Naive thymus-derived CD4-positive, alpha-beta T cell (primary cell): ENCODE measurements at regions of chr16 and their contacts with region 1.

Region 1: GRCh38 chr16:88452482-88453216 is 431 bp upstream of the ZFPM1 start:
- DNase-seq: peak; percentile 95 to 100 (median 98)
- ATAC-seq: peak; percentile 90
- H3K4me3 ChIP-seq: peak overlapping the region; percentile 61
- H3K4me3 Mint-ChIP-seq: peak overlapping the region; percentile 81 to 94 (median 84)
- H3K27ac ChIP-seq: peak overlapping the region; percentile 80
- H3K27ac Mint-ChIP-seq: peak overlapping the region; percentile 67 to 95 (median 87)
- H3K4me1 ChIP-seq: peaks cover 20 to 28% of the 10 kb centered on the region in 2 donors
- H3K4me1 Mint-ChIP-seq: peaks cover 19 to 29% (median 26%) of the 10 kb centered on the region in 7 donors
- H3K27me3 ChIP-seq: no peaks in the 10 kb centered on the region
- H3K27me3 Mint-ChIP-seq: peaks cover 0 to 9% (median 0%) of the 10 kb centered on the region in 5 donors

Region 2: GRCh38 chr16:87950765-87951549 is 501.7 kb before region 1 on chr16 and contains the start of gene BANP:
- CTCF ChIA-PET with region 1: no interaction called
- POLR2A ChIA-PET with region 1: interaction called, 4 read pairs
- intact Hi-C with region 1: loop called (anchors 1 to 5 kb)
- DNase-seq: peak; percentile 96 to 99 (median 99)
- ATAC-seq: peak; percentile 93
- H3K4me3 ChIP-seq: peak within 1 kb of the TSS; percentile 83
- H3K4me3 Mint-ChIP-seq: peak within 1 kb of the TSS; percentile 92 to 100 (median 99)
- H3K27ac ChIP-seq: peak within 1 kb of the TSS; percentile 90
- H3K27ac Mint-ChIP-seq: peak within 1 kb of the TSS; percentile 97 to 100 (median 99)
- H3K4me1 ChIP-seq: peaks cover 15 to 33% of the 10 kb centered on the region in 2 donors
- H3K4me1 Mint-ChIP-seq: peaks cover 27 to 66% (median 43%) of the 10 kb centered on the region in 7 donors
- H3K27me3 ChIP-seq: no peaks in the 10 kb centered on the region
- H3K27me3 Mint-ChIP-seq: peaks cover 0 to 8% (median 2%) of the 10 kb centered on the region in 5 donors
- total RNA-seq, gene BANP: 43.6 to 81.2 (median 68.5) TPM

Region 3: GRCh38 chr16:88505405-88506082 is 52.9 kb after region 1 on chr16:
- CTCF ChIA-PET with region 1: interaction called, 3 read pairs
- POLR2A ChIA-PET with region 1: no interaction called
- intact Hi-C with region 1: loop called in 1 of 2 experiments (anchors 1 kb)
- DNase-seq: peak; percentile 46 to 83 (median 75)
- ATAC-seq: peak; percentile 85
- H3K4me3 ChIP-seq: no peak overlapping the region
- H3K4me3 Mint-ChIP-seq: no peak overlapping the region
- H3K27ac ChIP-seq: peak overlapping the region; percentile 14
- H3K27ac Mint-ChIP-seq: peak overlapping the region in 3 of 9 donors; percentile 45 to 85 (median 46)
- H3K4me1 ChIP-seq: peaks cover 0 to 3% of the 10 kb centered on the region in 2 donors
- H3K4me1 Mint-ChIP-seq: peaks cover 0 to 18% (median 6%) of the 10 kb centered on the region in 7 donors
- H3K27me3 ChIP-seq: no peaks in the 10 kb centered on the region
- H3K27me3 Mint-ChIP-seq: no peaks in the 10 kb centered on the region

Region 4: GRCh38 chr16:88650749-88651275 is 198.2 kb after region 1 on chr16 and contains the start of gene CYBA:
- CTCF ChIA-PET with region 1: no interaction called
- POLR2A ChIA-PET with region 1: no interaction called
- intact Hi-C with region 1: loop called in 1 of 2 experiments (anchors 2 kb)
- DNase-seq: peak; percentile 54 to 88 (median 68)
- ATAC-seq: peak; percentile 92
- H3K4me3 ChIP-seq: peak within 1 kb of the TSS; percentile 78
- H3K4me3 Mint-ChIP-seq: peak within 1 kb of the TSS; percentile 84 to 93 (median 90)
- H3K27ac ChIP-seq: peak within 1 kb of the TSS; percentile 84
- H3K27ac Mint-ChIP-seq: peak within 1 kb of the TSS; percentile 82 to 98 (median 91)
- H3K4me1 ChIP-seq: peaks cover 20 to 28% of the 10 kb centered on the region in 2 donors
- H3K4me1 Mint-ChIP-seq: peaks cover 6 to 27% (median 13%) of the 10 kb centered on the region in 7 donors
- H3K27me3 ChIP-seq: no peaks in the 10 kb centered on the region
- H3K27me3 Mint-ChIP-seq: no peaks in the 10 kb centered on the region
- total RNA-seq, gene CYBA: 240 to 498 (median 281) TPM

Region 5: GRCh38 chr16:88706288-88706964 is 253.8 kb after region 1 on chr16 and contains the starts of genes CTU2 and RNF166:
- CTCF ChIA-PET with region 1: no interaction called
- POLR2A ChIA-PET with region 1: no interaction called
- intact Hi-C with region 1: loop called (anchors 1 to 5 kb)
- DNase-seq: peak; percentile 86 to 98 (median 92)
- ATAC-seq: peak; percentile 84
- H3K4me3 ChIP-seq: peak within 1 kb of the TSS; percentile 79
- H3K4me3 Mint-ChIP-seq: peak within 1 kb of the TSS; percentile 78 to 98 (median 94)
- H3K27ac ChIP-seq: peak within 1 kb of the TSS; percentile 88
- H3K27ac Mint-ChIP-seq: peak within 1 kb of the TSS; percentile 85 to 98 (median 97)
- H3K4me1 ChIP-seq: peaks cover 25 to 40% of the 10 kb centered on the region in 2 donors
- H3K4me1 Mint-ChIP-seq: peaks cover 31 to 45% (median 41%) of the 10 kb centered on the region in 7 donors
- H3K27me3 ChIP-seq: no peaks in the 10 kb centered on the region
- H3K27me3 Mint-ChIP-seq: no peaks in the 10 kb centered on the region
- total RNA-seq, gene CTU2: 26.0 to 43.3 (median 28.3) TPM
- total RNA-seq, gene RNF166: 99.8 to 324 (median 133) TPM

Region 6: DNA sequence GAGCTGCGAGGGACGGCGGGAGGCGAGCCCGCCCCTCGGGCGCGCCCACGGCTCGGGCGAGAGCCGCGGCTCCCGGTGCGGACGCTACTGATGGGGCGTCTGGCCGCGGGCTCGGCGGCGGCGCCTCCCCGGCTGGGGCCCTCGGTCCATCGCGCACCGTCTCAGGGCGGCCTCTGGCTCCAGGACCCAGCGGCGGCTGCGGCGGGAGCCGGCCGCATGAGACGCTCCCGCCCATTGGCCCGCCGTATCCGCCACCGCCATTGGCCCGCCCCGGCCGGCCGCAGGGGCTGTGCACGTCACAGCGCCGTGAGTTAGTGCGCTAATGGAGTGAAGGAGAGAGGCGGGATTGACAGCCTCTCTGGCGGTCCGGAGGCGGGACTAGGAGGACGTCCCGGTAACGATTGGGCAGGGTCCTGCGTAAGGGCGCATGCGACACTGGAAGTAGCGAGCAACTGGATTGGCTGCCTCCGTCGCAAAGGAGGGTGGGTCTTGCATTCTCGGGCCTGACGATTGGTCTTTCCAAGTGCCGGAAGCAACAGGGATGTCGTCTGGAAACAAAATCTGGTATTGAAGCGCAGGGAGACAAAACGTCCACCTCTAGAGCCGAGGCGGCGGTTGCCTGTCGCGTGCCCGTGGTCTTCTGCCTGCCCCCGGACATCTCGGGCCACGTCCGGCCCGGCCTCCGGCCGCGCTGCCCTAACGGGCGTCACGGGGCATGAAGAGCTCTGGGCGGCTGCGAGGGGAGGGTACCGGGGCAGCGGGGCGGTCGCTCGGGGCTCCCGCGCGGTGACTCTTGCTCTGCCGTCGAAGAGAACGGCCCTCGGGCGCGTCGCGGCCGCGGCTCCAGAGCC is 1038.0 kb after region 1 on chr16 and contains the start of gene ANKRD11:
- CTCF ChIA-PET with region 1: no interaction called
- POLR2A ChIA-PET with region 1: no interaction called
- intact Hi-C with region 1: loop called in 1 of 2 experiments (anchors 10 kb)
- DNase-seq: peak; percentile 99 to 100 (median 99)
- ATAC-seq: peak; percentile 93
- H3K4me3 ChIP-seq: peak within 1 kb of the TSS; percentile 92
- H3K4me3 Mint-ChIP-seq: peak within 1 kb of the TSS; percentile 89 to 98 (median 94)
- H3K27ac ChIP-seq: peak within 1 kb of the TSS; percentile 90
- H3K27ac Mint-ChIP-seq: peak within 1 kb of the TSS; percentile 92 to 99 (median 97)
- H3K4me1 ChIP-seq: peaks cover 44 to 48% of the 10 kb centered on the region in 2 donors
- H3K4me1 Mint-ChIP-seq: peaks cover 48 to 73% (median 53%) of the 10 kb centered on the region in 7 donors
- H3K27me3 ChIP-seq: no peaks in the 10 kb centered on the region
- H3K27me3 Mint-ChIP-seq: peaks cover 0 to 2% (median 0%) of the 10 kb centered on the region in 5 donors
- total RNA-seq, gene ANKRD11: 178 to 254 (median 240) TPM